MCF 10A (cell line): ENCODE measurements at regions of chr6 and their contacts with region 1.

Region 1: DNA sequence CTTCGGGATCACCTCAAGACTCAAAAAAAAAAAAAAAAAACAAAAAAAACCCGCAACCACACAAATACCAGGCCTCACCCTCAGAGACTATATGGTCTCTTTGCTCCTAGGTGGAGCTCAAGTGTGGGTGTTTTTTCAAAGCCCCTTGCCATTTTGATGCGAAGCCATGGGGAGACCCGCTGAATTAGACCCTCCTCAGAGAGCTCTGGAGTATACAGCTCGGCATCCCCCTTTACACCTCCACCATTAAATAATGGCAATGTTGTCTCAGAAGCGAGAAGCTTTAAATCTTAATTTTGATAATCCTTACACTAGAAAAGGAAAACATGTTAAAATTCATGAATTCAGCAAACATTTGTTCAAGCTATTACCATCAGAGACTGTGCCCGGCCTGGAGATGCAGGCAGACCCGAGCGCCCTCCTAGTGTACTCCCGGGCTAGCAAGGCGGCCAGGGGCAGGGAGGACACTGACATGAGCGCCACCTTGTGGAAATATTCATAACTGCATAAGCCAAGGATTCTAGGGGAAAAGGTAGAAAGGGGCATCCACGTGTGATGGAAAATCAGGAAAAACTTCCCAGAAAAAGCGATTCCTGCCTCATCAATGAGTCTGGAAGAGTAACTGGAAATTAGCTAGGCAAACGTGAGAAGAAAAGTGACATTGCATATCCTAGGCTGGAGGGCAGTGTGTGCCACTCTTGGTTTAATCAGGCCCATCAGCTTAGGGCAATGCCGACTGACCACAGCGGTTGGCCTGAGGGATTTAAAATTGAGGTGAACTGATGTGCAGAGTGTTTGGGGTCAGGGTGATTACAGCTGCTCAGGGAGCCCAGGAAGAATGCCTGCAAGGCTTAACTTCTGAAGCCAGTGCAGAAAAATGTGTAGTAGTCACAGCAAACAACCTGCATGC is 72.5 kb downstream of the B3GAT2 start:
- DNase-seq: peak; percentile 68
- H3K4me3 Mint-ChIP-seq: no peak overlapping the region
- H3K27ac Mint-ChIP-seq: no peak overlapping the region
- H3K4me1 Mint-ChIP-seq: no peaks in the 10 kb centered on the region
- H3K27me3 Mint-ChIP-seq: peaks cover 57% of the 10 kb centered on the region
- CTCF ChIP-seq: peak; percentile 87

Region 2: DNA sequence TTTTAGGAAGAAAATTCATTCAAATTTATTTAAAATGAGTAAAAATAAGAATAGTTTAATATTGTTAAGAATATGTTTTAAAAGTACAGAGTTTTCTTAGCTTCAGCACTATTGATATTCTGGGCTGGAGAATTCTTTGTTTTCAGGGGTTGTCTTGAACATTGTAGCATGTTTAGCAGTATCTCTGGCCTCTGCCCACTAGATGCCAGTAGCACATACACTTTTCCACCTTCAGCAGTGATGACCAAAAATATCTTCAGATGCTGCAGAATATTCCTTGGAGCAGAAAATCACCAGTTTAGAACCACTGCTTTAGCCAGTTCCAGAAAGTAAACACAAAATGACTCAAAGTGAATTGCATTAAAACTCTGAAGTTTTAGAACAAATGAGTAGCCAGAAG is 337.0 kb before region 1 on chr6:
- CTCF ChIA-PET with region 1: interaction called, 18 read pairs
- POLR2A ChIA-PET with region 1: no interaction called
- intact Hi-C with region 1: no loop called
- DNase-seq: peak; percentile 10
- H3K4me3 Mint-ChIP-seq: no peak overlapping the region
- H3K27ac Mint-ChIP-seq: no peak overlapping the region
- H3K4me1 Mint-ChIP-seq: no peaks in the 10 kb centered on the region
- H3K27me3 Mint-ChIP-seq: no peaks in the 10 kb centered on the region
- CTCF ChIP-seq: peak; percentile 28

Region 3: DNA sequence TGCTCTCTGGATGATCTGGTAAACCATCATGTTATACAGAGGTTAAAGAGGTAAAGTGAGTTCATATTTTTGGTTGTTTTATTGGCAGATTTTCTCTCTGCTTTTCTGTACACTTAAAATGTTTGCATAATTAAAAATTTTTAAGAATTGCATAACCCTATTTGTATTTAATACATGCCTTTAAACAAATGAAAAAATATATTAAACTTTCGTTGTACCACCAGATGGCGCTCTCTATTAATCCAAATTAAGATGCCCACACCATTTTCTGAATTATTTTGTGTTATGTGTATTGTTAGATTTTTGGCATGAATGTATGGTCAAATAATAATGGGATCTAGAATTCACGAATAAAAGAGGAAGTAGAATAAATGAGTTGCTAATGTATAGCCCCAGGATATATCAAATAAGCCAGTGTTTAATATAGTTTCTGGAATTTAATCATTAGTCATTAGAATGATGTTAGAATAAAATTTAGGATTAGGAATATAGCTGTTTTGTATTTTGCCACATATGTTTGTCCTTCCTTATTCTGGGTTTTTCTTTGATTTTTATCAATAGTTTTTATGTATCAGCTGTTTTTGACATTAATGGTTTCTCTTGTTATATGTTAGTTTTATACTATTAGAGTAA is 177.7 kb before region 1 on chr6:
- CTCF ChIA-PET with region 1: interaction called, 178 read pairs
- POLR2A ChIA-PET with region 1: interaction called, 3 read pairs
- intact Hi-C with region 1: loop called (anchors 1 kb)
- DNase-seq: peak; percentile 61
- H3K4me3 Mint-ChIP-seq: no peak overlapping the region
- H3K27ac Mint-ChIP-seq: no peak overlapping the region
- H3K4me1 Mint-ChIP-seq: peaks cover 6% of the 10 kb centered on the region
- H3K27me3 Mint-ChIP-seq: no peaks in the 10 kb centered on the region
- CTCF ChIP-seq: peak; percentile 36

Region 4: GRCh38 chr6:70821751-70822150 is 62.6 kb before region 1 on chr6:
- CTCF ChIA-PET with region 1: interaction called, 11 read pairs
- POLR2A ChIA-PET with region 1: interaction called, 3 read pairs
- intact Hi-C with region 1: no loop called
- DNase-seq: no peak
- H3K4me3 Mint-ChIP-seq: no peak overlapping the region
- H3K27ac Mint-ChIP-seq: no peak overlapping the region
- H3K4me1 Mint-ChIP-seq: no peaks in the 10 kb centered on the region
- H3K27me3 Mint-ChIP-seq: no peaks in the 10 kb centered on the region
- CTCF ChIP-seq: no peak

Region 5: DNA sequence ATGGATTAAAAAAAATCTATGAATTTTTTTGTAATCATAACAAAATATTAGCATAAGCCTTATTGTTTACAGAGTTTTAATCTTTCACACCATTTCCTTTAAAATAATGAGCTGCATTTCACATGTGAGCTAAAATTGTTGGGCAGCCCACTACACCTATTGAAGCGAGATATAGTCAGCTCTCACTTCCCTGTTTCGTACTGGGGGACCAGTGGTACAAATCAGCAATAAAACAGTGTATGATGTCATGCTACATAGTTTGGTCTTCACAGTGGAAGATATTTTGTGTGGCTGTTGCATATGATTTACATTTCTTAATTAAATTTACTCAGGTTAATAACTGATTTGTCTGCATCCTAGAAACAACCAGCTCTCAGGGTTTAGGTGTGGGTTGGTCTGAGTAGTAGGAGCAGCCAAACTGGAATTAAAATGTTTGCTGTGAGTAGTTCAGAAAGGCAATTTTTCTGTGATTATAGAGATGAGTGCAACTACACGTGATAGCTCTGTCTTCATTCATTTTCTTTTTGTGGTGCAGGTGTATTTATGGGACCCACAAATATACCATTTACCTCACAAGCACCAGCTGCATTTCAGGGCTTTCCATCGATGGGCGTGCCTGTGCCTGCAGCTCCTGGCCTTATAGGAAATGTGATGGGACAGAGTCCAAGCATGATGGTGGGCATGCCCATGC is 26.8 kb before region 1 on chr6:
- CTCF ChIA-PET with region 1: interaction called, 21 read pairs
- POLR2A ChIA-PET with region 1: no interaction called
- intact Hi-C with region 1: no loop called
- DNase-seq: no peak
- H3K4me3 Mint-ChIP-seq: no peak overlapping the region
- H3K27ac Mint-ChIP-seq: no peak overlapping the region
- H3K4me1 Mint-ChIP-seq: no peaks in the 10 kb centered on the region
- H3K27me3 Mint-ChIP-seq: no peaks in the 10 kb centered on the region
- CTCF ChIP-seq: no peak

Region 6: DNA sequence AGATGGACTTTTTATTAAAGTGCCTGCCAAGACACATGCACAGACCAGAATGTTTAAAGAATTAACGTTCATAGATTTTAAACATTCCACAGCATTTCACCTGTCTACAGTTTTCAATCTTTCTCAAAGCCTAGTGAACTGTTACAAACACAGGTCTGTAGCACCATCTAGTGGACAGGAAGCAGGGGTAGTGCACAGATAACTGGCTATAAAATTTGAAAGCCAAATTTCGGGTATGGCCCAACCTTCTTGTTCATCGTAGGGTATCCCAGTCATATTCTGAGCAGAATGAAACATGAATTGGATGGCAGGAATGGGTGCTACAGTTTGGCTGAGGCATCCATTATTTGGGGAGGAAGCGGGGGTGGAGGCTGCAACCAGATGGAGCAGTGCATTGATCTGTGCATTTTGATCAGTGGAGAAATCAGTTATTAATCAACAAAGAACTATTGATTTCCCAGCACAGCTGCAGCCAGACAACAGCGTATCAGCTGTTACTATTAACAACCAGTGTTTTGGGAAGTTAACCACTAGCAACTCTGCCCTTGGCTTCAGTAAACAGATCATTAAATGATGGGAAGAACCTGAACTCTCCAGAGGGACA is 128.6 kb after region 1 on chr6:
- CTCF ChIA-PET with region 1: interaction called, 9 read pairs
- POLR2A ChIA-PET with region 1: no interaction called
- intact Hi-C with region 1: loop called (anchors 10 kb)
- DNase-seq: peak; percentile 73
- H3K4me3 Mint-ChIP-seq: no peak overlapping the region
- H3K27ac Mint-ChIP-seq: no peak overlapping the region
- H3K4me1 Mint-ChIP-seq: no peaks in the 10 kb centered on the region
- H3K27me3 Mint-ChIP-seq: peaks cover 56% of the 10 kb centered on the region
- CTCF ChIP-seq: peak; percentile 82